Caco-2 (cell line): ENCODE measurements at regions of chr5 and their contacts with region 1.

Region 1: DNA sequence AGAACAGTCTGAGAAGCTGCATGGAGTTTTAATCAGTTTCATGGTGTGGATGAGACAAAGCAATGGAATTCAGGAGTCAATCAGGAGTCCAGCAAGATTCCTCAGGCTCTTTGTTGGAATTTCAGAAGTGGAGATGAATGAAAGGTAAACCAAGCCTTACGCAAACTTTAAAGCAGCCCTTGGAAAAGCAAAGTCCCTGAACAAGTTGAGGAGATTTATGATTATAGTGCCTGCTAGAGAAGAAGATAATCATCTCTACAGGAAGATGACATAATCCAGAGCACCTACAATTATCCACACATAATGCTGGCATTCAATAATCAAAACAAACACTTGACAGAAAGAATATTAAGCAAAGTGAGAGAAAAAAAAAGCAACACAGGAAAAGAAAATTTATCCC is 1380.1 kb upstream of the NUDT12 start:
- DNase-seq: peak; percentile 57 to 64
- H3K4me3 ChIP-seq: no peak overlapping the region
- H3K4me3 Mint-ChIP-seq: peak overlapping the region; percentile 13
- H3K27ac Mint-ChIP-seq: peak overlapping the region; percentile 77
- H3K4me1 ChIP-seq: peaks cover 40% of the 10 kb centered on the region
- H3K4me1 Mint-ChIP-seq: peaks cover 37% of the 10 kb centered on the region
- H3K27me3 ChIP-seq: no peaks in the 10 kb centered on the region
- H3K27me3 Mint-ChIP-seq: no peaks in the 10 kb centered on the region
- CTCF ChIP-seq: no peak

Region 2: GRCh38 chr5:104734046-104734445 is 208.7 kb before region 1 on chr5:
- CTCF ChIA-PET with region 1: no interaction called
- POLR2A ChIA-PET with region 1: no interaction called
- intact Hi-C with region 1: loop called (anchors 10 kb)
- DNase-seq: no peak
- H3K4me3 ChIP-seq: no peak overlapping the region
- H3K4me3 Mint-ChIP-seq: no peak overlapping the region
- H3K27ac Mint-ChIP-seq: no peak overlapping the region
- H3K4me1 ChIP-seq: no peaks in the 10 kb centered on the region; the same call in 1 of the 2 replicates
- H3K4me1 Mint-ChIP-seq: no peaks in the 10 kb centered on the region
- H3K27me3 ChIP-seq: no peaks in the 10 kb centered on the region
- H3K27me3 Mint-ChIP-seq: no peaks in the 10 kb centered on the region
- CTCF ChIP-seq: no peak

Region 3: GRCh38 chr5:104904561-104904960 is 38.2 kb before region 1 on chr5:
- CTCF ChIA-PET with region 1: no interaction called
- POLR2A ChIA-PET with region 1: no interaction called
- intact Hi-C with region 1: loop called (anchors 2 kb)
- DNase-seq: peak in 1 of 2 experiments; percentile 11
- H3K4me3 ChIP-seq: no peak overlapping the region
- H3K4me3 Mint-ChIP-seq: no peak overlapping the region
- H3K27ac Mint-ChIP-seq: no peak overlapping the region
- H3K4me1 ChIP-seq: peaks cover 17% of the 10 kb centered on the region
- H3K4me1 Mint-ChIP-seq: peaks cover 19% of the 10 kb centered on the region
- H3K27me3 ChIP-seq: no peaks in the 10 kb centered on the region
- H3K27me3 Mint-ChIP-seq: no peaks in the 10 kb centered on the region
- CTCF ChIP-seq: no peak